ENCODE measurements at regions of chr19 and their contacts with region 1.

Region 1: DNA sequence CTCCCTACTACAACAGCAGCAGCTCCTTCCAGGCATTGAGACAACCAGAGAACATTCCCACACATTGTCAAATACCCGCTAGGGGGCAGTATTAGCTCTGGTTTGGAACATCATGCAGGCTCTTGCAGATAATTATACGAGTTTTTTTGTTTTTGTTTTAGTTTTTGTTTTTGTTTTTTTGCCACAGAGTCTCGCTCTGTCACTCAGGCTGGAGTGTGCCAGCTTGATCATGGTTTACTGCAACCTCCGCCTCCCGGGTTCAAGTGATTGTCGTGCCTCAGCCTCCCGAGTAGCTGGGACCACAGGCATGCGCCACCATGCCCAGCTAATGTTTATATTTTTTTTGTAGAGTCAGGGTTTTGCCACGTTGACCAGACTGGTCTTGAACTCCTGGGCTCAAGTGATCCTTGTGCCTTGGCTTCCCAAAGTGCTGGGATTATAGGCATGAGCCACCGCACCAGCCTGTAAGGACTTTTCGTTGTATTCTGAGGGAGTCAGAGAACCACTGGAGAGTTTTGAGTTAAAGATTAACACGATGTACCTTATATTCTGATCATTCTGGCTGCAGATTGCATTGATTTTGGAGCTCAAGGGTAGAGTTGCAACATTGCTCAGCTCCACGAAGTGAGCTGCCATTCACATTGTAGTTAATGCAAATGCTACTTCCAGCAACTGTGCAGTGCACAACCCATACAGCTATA is 41.7 kb upstream of the CEACAM20 start:
- DNase-seq: peak in 23 of 35 experiments; percentile 3 to 66 (median 26)
- ATAC-seq: no peak
- H3K4me3 ChIP-seq: no peak overlapping the region
- H3K4me3 Mint-ChIP-seq: no peak overlapping the region
- H3K27ac ChIP-seq: no peak overlapping the region
- H3K27ac Mint-ChIP-seq: no peak overlapping the region
- H3K4me1 ChIP-seq: no peaks in the 10 kb centered on the region
- H3K4me1 Mint-ChIP-seq: peaks cover 0 to 7% (median 0%) of the 10 kb centered on the region in 3 donors
- H3K27me3 ChIP-seq: peaks cover 0 to 13% of the 10 kb centered on the region in 2 experiments
- H3K27me3 Mint-ChIP-seq: peaks cover 14 to 25% of the 10 kb centered on the region in 2 donors

Region 2: DNA sequence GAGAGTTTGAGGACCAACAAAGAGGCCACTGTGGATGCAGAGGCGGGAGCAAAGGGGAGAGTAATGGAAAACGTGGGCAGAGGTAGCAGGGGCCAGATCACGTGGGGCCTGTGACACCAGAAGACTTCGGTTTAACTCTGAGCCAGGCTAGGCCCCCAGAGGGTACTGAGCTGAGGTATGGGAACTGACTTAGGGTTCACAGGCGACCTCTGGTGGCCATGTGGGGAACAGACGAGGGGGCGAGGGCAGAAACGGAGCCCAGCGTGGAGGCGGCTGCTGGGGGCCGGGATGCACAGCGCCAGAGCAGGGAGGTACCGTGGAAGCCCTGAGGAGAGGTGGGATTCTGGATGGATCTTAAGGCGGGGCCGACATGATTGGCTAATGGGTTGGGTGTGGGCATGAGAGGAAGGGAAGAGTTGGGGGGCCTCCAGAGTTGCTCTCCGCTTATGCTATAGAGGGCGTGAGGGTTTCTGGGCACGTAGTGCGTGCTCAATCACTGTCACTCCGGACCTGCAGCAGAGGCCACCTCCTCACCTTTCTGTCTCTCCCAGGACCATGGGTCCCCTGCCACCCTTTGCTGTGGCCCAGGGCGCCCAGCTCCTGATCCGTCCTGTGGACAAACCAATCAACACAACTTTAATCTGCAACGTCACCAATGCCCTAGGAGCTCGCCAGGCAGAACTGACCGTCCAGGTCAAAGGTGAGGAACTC is 86.2 kb after region 1 on chr19:
- CTCF ChIA-PET with region 1: interaction called, 5 to 10 read pairs
- POLR2A ChIA-PET with region 1: no interaction called
- DNase-seq: peak; percentile 7 to 75 (median 49)
- ATAC-seq: peak; percentile 41 to 59 (median 51)
- H3K4me3 ChIP-seq: no peak overlapping the region
- H3K4me3 Mint-ChIP-seq: no peak overlapping the region
- H3K27ac ChIP-seq: no peak overlapping the region
- H3K27ac Mint-ChIP-seq: no peak overlapping the region
- H3K4me1 ChIP-seq: peaks cover 0 to 11% of the 10 kb centered on the region in 2 experiments
- H3K4me1 Mint-ChIP-seq: peaks cover 9 to 17% (median 11%) of the 10 kb centered on the region in 3 donors
- H3K27me3 ChIP-seq: peaks cover 0 to 27% of the 10 kb centered on the region in 2 experiments
- H3K27me3 Mint-ChIP-seq: no peaks in the 10 kb centered on the region

Measured in T-cell (primary cell).